Left ventricle myocardium superior (tissue), 1 donor: ENCODE measurements at regions of chr1 and their contacts with region 1.

Region 1: DNA sequence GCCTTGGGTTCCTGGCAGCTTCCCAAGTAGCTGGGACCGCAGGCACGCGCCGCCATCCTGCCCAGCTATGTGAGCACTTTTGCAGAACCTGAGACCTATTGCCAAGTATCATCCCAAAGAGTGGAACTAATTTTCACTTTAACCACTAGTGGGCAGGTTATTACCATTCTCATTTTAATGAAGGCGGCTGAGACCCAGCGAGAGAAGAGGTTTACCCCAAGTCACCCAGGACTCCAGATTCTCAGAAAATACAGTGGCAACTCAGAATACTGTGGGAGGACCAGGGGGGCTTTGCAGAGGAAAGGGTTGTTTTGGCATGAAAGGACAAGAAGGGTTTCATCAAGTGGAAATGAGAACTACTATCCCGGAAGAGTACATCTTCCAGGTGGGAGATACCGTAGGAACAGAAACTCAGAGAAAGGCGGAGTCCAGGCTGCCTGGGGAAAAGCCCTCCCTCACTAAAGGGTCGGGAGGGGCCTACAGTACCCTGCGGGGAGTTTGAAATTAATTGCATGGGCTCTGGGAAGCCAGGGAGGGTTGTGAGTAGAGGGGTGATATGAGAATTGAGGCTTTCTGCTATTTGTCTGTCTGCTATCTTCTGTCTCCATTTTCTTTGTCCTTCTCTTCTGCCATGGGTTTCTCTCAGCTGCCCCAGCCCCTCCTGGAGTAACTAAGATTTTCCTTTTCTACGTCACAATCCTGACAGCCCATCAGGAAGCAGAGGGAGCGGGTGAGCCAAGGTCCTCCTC is 7.2 kb upstream of the SEMA4A start:
- DNase-seq: peak; percentile 81
- ATAC-seq: peak; percentile 68

Region 2: GRCh38 chr1:156226116-156226538 is 79.9 kb after region 1 on chr1:
- intact Hi-C with region 1: loop called (anchors 10 kb)
- DNase-seq: no peak
- ATAC-seq: no peak

Region 3: DNA sequence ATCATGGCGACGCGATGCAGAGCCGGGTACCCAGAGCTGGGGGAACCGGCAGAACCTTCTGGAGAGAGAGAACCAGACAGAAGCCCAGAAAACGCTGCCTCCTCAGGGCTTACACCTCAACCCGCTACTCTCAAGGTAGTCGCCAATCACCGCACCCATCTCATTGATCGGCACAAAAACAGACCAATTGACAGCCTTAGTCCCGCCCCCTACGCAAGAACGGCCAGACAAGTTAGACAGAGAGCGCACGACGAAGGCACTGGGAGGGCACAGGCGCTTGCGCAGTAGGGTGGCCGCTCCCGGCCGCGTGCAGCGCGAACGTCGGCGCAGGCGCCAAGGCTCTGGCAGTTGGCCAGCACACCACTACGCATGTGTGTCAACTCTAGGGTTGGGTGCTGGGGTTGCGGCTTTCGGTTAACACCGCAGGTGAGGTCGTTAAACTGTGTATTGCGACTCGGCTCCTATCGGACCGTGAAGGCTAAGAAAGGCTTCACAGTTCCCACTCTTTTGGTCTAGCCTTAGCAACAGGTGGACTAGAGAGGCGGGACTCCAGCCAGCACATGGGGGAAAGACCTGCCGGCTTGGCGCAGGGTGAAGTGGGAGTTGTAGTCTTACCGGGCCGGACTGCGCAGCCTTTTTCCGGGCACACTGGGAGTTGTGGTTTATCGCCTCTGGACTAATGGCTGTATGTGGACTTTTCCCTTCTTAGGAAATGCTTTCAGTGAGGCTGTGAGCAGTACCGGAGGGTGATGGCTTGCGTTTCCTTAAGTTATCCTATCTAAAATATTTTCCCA is 192.2 kb after region 1 on chr1 and contains the starts of genes CCT3 and TSACC:
- intact Hi-C with region 1: no loop called
- DNase-seq: peak; percentile 100
- ATAC-seq: peak; percentile 97
- total RNA-seq, gene CCT3: 131 TPM
- total RNA-seq, gene TSACC: not detected

Region 4: DNA sequence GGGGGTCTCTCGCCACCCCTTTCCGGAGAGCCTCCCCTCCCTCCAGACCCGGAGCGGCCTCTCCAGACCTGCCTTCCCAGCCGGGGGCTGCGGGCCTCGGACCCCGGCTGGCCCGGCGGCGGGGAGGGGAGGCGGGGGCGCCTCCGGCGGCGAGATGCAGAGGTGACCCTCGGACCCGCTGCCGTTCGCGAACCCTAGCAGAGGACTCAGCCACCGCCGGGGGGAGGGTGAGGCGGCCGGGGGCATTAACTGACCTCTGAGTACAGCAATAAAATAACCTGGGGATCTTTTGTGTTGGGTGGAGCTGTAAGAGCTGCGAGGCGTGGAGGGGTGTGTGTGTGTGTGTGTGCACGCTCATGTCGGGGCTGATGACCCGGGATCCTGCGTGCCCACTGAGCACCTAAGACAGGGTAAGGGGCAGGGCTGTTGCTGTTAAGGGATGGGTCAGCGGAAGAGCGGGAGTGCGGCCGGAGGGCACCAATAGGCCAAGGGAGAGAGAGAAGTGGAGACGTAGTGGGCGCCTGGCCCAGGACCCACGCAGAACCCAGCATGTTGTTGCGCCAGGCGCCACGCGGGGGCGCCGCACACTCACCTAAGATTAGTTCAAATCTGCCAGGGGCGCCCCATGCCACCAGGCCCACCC is 479.4 kb after region 1 on chr1:
- intact Hi-C with region 1: no loop called
- DNase-seq: peak; percentile 78
- ATAC-seq: peak; percentile 70